ENCODE measurements at regions of chr19 and their contacts with region 1.

Region 1: GRCh38 chr19:30649934-30650614 is 277.9 kb downstream of the ZNF536 start:
- DNase-seq: peak; percentile 72 to 87
- ATAC-seq: peak; percentile 50 to 85; a peak in 5 of 6 replicates
- H3K4me3 ChIP-seq: no peak overlapping the region
- H3K27ac ChIP-seq: no peak overlapping the region
- H3K4me1 ChIP-seq: no peaks in the 10 kb centered on the region
- CTCF ChIP-seq: peak; percentile 99
- EP300 ChIP-seq: no peak
- POLR2A ChIP-seq: no peak
- RAD21 ChIP-seq: peak; percentile 94 to 98

Region 2: GRCh38 chr19:30231408-30232318 is 418.4 kb before region 1 on chr19:
- CTCF ChIA-PET with region 1: interaction called, 10 read pairs
- POLR2A ChIA-PET with region 1: no interaction called
- DNase-seq: no peak
- ATAC-seq: no peak
- H3K4me3 ChIP-seq: no peak overlapping the region
- H3K27ac ChIP-seq: no peak overlapping the region
- H3K4me1 ChIP-seq: peaks cover 17% of the 10 kb centered on the region
- CTCF ChIP-seq: no peak
- EP300 ChIP-seq: no peak
- POLR2A ChIP-seq: no peak
- RAD21 ChIP-seq: no peak

Region 3: GRCh38 chr19:30755581-30755980 is 105.5 kb after region 1 on chr19:
- CTCF ChIA-PET with region 1: no interaction called
- POLR2A ChIA-PET with region 1: no interaction called
- DNase-seq: no peak
- ATAC-seq: no peak
- H3K4me3 ChIP-seq: no peak overlapping the region
- H3K27ac ChIP-seq: no peak overlapping the region
- H3K4me1 ChIP-seq: no peaks in the 10 kb centered on the region
- CTCF ChIP-seq: no peak
- EP300 ChIP-seq: no peak
- POLR2A ChIP-seq: no peak
- RAD21 ChIP-seq: no peak

Region 4: DNA sequence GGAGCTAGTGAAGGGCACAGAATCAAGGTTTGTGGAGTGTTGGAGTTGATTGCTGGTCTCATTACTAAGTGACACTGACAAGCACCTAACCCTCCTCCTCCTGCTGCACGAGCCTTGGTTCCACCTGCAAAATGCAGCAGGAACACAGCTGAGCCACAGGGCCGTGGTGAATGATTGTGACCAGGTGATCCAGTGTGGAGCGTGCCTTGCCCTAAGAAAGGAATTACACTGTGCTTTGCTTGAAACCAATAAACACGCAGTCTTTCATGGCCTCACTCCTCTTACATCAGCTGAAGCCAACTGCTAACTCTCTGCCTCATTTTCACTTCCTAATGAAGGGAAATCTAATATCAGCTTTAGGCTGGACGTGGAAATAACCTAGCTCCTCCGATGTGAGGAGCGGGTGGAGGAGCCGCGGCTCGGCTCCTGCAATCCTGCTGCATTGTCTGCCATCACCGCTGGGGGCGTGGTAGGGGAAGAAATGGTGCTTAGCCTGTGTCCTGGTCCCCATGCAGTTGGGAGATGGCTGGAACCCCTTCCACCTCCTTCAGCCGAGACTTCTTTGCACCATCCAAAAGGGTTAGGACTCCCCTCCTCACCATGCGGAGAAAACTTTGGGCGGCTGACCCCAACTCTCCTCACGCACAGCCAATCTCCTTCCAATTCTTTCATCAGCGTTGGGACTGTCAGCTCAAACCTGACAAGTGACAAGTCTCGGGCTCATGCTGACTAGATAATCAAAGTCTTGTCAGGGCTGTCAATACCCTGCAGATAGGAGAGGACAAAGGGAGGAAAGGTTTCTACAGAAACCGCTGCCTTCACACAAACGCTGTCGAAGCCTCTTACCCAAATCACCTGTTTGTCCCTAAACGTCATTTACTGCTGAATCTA is 150.0 kb after region 1 on chr19:
- CTCF ChIA-PET with region 1: no interaction called
- POLR2A ChIA-PET with region 1: no interaction called
- DNase-seq: peak; percentile 38 to 83
- ATAC-seq: peak; percentile 61 to 94; a peak in 4 of 6 replicates
- H3K4me3 ChIP-seq: no peak overlapping the region
- H3K27ac ChIP-seq: no peak overlapping the region
- H3K4me1 ChIP-seq: no peaks in the 10 kb centered on the region
- CTCF ChIP-seq: peak; percentile 56
- EP300 ChIP-seq: no peak
- POLR2A ChIP-seq: no peak
- RAD21 ChIP-seq: peak; percentile 32 to 56; a peak in 4 of 5 replicates